Ascending aorta (tissue), 2 donors: ENCODE measurements at regions of chr2 and their contacts with region 1.

Region 1: DNA sequence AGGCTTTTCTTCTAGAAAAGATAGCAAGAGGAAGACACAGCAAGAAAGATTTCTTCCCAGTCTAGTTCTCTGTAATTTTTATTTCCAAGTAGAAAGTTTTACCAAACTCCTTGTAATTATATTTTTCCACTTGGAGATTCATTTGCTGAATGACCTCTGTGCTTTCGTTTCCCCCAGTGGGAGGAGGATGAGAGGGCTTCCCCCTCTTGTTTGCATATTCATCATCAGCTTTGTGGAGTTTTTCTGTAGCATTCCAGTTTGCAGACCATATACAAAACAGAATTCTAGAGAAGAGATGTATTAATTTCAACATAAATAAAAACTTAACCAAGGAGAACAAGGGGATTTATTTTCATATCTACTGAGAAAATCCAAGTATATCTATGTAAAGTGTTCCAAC is 51.3 kb downstream of the RMDN2 start:
- DNase-seq: no peak
- H3K4me3 ChIP-seq: no peak overlapping the region
- H3K27ac ChIP-seq: no peak overlapping the region
- H3K4me1 ChIP-seq: no peaks in the 10 kb centered on the region
- H3K27me3 ChIP-seq: no peaks in the 10 kb centered on the region
- CTCF ChIP-seq: no peak

Region 2: GRCh38 chr2:37555457-37555856 is 421.0 kb before region 1 on chr2:
- intact Hi-C with region 1: no loop called
- DNase-seq: no peak
- H3K4me3 ChIP-seq: no peak overlapping the region
- H3K27ac ChIP-seq: no peak overlapping the region
- H3K4me1 ChIP-seq: no peaks in the 10 kb centered on the region
- H3K27me3 ChIP-seq: no peaks in the 10 kb centered on the region
- CTCF ChIP-seq: no peak

Region 3: DNA sequence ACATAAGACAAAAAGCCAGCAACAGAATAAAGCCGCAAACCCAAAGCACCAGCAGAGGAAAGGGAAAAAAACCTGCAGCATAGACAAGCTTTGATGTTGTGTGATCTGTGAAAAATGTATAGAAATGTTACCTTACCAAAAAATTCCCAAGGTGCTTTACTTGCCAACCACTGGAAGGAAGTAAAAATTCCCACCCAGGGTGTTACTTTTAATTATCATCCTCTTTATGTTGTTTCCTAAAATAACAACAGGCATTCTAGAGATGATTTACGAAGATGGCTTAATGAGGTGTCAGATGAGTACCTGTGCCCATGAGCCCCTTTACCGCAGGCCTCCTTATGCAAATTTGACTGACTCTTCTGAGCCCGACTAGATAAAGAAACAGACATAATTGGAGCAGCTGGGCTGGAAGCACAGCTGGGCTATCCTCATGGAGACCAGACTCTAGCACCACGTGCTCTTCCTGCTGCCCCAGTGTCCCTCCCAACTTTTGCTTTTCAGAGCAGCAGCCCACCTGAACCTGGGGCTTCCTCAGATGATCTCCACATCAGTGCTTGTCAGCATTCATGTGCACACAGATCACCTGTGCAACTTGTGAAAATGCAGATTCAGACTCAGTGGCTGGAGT is 733.3 kb after region 1 on chr2:
- intact Hi-C with region 1: loop called (anchors 5 kb)
- DNase-seq: no peak
- H3K4me3 ChIP-seq: no peak overlapping the region
- H3K27ac ChIP-seq: no peak overlapping the region
- H3K4me1 ChIP-seq: no peaks in the 10 kb centered on the region
- H3K27me3 ChIP-seq: no peaks in the 10 kb centered on the region
- CTCF ChIP-seq: no peak